AG04450 (cell line): ENCODE measurements at regions of chr9 and their contacts with region 1.

Region 1: DNA sequence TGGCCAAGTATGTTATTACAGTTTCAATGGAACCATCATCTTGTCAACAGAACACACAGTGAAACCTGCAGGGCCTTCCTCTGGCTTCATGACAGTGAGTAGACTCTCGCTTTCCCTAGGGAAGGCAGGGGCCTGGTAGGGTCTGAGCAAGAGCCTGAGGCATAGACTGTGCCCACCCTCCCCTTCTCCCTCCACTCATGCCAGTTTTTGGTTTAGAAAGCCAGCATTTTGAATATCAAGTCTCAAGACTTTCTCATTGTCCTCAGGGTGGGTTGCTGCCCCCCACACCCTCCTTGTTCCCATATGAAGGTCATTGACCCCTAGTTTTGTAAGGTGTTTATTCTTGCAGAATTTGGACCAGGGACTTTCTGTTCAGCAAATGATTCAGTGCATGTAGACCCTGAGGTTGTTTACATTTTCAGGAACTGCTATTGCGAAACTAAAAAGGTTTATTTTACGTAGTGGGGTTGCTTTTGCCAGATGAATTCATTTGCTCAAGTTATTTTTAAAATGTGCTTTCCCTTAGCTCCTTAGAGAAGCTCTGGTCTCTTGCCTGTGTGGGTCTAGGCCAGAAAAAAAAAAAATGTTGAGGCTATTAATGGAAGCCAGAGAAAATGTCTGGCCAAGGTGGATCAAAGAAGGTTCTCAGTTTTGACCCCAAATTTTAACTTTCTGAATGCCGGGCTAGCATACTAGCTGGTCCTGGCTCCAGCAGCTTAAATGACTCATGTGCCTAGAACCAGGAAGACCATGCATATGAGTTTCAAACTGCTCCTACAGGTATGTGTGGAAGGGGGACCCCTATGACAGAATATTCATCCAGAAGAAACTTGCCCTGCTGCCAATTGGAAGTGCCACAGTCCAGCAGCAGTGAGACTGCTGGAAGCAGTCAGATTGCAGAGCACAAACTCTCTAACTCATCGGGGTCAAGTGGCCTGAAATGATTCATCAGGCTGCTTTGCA is 10.1 kb upstream of the MOB3B start:
- DNase-seq: peak; percentile 51
- H3K4me3 ChIP-seq: no peak overlapping the region
- H3K27ac ChIP-seq: peak overlapping the region; percentile 80
- H3K27me3 ChIP-seq: no peaks in the 10 kb centered on the region
- CTCF ChIP-seq: no peak

Region 2: GRCh38 chr9:27303219-27303618 is 236.5 kb before region 1 on chr9:
- CTCF ChIA-PET with region 1: no interaction called
- POLR2A ChIA-PET with region 1: no interaction called
- DNase-seq: no peak
- H3K4me3 ChIP-seq: no peak overlapping the region
- H3K27ac ChIP-seq: no peak overlapping the region
- H3K27me3 ChIP-seq: peaks cover 4% of the 10 kb centered on the region
- CTCF ChIP-seq: no peak

Region 3: DNA sequence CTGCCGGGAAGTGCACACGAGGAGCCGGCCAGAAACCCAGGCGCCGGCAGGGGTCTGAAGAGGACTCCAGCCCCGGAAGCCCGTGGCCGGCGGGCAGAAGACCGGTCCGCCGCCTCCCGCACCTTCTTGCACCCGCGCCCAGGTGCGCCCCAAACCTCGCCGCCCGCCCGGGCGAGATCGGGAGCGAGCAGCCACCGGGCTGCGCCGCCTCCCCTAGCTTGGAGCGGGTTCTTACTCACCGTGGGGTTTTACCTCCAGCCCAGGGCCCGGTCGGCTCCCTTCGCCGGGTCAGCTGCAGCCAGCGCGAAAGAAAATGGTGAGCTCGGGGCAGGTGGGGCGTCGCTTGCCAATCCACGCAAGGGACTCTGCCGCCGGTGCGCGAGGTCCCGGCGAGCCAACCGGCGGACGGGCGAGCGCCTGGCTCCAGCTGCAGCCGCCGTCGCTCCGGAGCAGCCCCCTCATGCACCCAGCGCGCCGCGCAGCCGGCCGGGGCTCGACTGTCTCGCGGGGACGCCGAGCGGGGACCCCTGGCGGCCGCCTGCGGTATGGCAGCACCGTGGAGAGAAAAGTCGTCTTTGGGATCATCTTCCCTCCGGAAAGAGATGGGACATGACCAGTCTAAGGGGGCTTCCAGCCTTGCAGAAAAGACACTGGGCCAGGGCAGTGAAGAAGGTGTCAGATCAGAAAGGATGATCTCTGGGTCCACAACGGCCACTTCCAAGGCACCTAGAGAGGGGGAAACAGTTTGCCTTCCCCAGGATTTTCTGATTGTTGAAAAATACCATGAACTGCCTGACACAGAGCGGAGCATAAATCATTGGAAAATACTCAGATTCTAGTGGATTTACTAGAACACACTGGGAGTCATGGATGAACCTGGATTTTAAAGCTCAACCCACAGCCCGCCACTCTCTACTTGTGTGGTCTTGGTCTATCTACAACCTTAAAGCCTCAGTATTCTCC is 10.2 kb before region 1 on chr9 and contains the start of gene MOB3B:
- CTCF ChIA-PET with region 1: interaction called, 30 read pairs
- POLR2A ChIA-PET with region 1: no interaction called
- DNase-seq: peak; percentile 16
- H3K4me3 ChIP-seq: peak within 1 kb of the TSS; percentile 64
- H3K27ac ChIP-seq: no peak within 1 kb of the TSS
- H3K27me3 ChIP-seq: peaks cover 33% of the 10 kb centered on the region
- CTCF ChIP-seq: peak; percentile 78
- polyA plus RNA-seq, gene MOB3B: 0.32 and 0.38 TPM in 2 replicates